ENCODE measurements at regions of chr5 and their contacts with region 1.

Region 1: DNA sequence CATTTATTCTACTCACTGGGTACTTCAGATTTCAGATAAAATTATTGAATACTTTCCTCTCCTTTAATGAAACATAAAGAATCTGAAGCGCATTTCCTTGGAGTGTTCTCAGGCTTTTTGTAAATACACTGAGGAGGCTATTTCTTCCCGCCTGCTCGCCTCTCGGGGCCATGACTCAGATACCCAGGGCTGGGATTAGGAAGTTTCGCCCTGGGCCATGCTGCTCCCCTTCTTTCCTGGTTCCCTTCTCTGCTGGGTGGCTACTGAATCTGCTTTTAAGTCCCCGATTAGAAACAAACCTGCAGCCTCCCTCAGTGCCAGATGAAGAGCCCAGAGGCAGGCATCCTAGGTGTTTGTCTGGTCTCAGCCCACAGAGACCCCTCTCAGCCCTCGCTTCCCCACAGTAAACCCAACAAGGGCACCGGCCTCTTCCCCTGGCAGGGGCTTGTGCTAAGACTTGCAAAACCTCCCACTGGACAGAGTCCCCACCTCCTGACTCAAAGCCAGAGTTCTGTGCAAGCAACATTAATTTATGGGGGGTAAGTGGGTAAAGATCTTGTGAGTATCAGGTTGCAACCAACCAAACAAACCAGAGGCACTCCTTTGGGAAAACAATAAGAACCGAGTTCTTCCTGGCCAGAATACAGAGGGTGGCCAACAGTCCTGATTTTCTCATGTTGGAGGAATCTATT is 30.7 kb upstream of the IRX1 start:
- DNase-seq: no peak
- ATAC-seq: no peak
- H3K4me3 ChIP-seq: no peak overlapping the region
- H3K27ac ChIP-seq: no peak overlapping the region
- H3K4me1 ChIP-seq: no peaks in the 10 kb centered on the region
- H3K27me3 ChIP-seq: peaks cover 0 to 15% (median 0%) of the 10 kb centered on the region in 9 donors
- CTCF ChIP-seq: no peak
- POLR2A ChIP-seq: no peak

Region 2: DNA sequence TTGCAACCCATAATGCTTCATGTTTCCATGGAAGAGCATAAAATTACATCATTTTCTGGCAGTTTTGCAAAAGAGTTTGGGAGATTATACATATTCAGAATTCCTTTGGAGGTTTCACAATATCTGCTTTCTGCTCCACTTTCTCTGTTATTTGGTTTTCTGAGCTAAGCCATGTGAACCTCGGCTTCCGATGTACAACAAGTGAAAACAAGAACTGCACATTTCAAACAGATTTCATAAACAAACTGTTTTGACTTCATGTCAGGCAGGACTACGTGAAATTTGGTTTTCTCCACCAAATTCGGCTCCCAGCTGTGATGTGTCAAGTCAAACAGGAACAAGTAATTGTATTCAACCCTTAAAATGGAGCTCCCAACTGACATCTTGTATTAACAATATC is 640.4 kb after region 1 on chr5:
- intact Hi-C with region 1: loop called in 1 of 10 experiments (anchors 10 kb)
- DNase-seq: no peak
- ATAC-seq: peak in 2 of 4 donors; percentile 18 to 39
- H3K4me3 ChIP-seq: no peak overlapping the region
- H3K27ac ChIP-seq: peak overlapping the region in 6 of 12 donors; percentile 8 to 42 (median 24)
- H3K4me1 ChIP-seq: peaks cover 0 to 7% (median 0%) of the 10 kb centered on the region in 12 donors
- H3K27me3 ChIP-seq: no peaks in the 10 kb centered on the region
- CTCF ChIP-seq: no peak
- POLR2A ChIP-seq: no peak

Measured in heart left ventricle (tissue), 16 donors.